ENCODE measurements at regions of chr7 and their contacts with region 1.

Region 1: GRCh38 chr7:103025341-103025740 is 49.3 kb downstream of the FBXL13 start:
- DNase-seq: no peak
- ATAC-seq: no peak
- H3K4me3 ChIP-seq: no peak overlapping the region
- H3K27ac ChIP-seq: no peak overlapping the region
- H3K4me1 ChIP-seq: no peaks in the 10 kb centered on the region
- H3K27me3 ChIP-seq: no peaks in the 10 kb centered on the region
- CTCF ChIP-seq: no peak

Region 2: GRCh38 chr7:102951839-102952238 is 73.5 kb before region 1 on chr7:
- CTCF ChIA-PET with region 1: interaction called, 10 read pairs
- POLR2A ChIA-PET with region 1: no interaction called
- intact Hi-C with region 1: no loop called
- DNase-seq: no peak
- ATAC-seq: no peak
- H3K4me3 ChIP-seq: no peak overlapping the region
- H3K27ac ChIP-seq: no peak overlapping the region
- H3K4me1 ChIP-seq: no peaks in the 10 kb centered on the region
- H3K27me3 ChIP-seq: no peaks in the 10 kb centered on the region
- CTCF ChIP-seq: no peak

Region 3: GRCh38 chr7:103009466-103010185 is 15.7 kb before region 1 on chr7:
- CTCF ChIA-PET with region 1: no interaction called
- POLR2A ChIA-PET with region 1: no interaction called
- intact Hi-C with region 1: no loop called
- DNase-seq: no peak
- ATAC-seq: no peak
- H3K4me3 ChIP-seq: no peak overlapping the region
- H3K27ac ChIP-seq: no peak overlapping the region
- H3K4me1 ChIP-seq: peaks cover 5% of the 10 kb centered on the region; the same call in 1 of the 2 replicates
- H3K27me3 ChIP-seq: no peaks in the 10 kb centered on the region
- CTCF ChIP-seq: no peak

Region 4: DNA sequence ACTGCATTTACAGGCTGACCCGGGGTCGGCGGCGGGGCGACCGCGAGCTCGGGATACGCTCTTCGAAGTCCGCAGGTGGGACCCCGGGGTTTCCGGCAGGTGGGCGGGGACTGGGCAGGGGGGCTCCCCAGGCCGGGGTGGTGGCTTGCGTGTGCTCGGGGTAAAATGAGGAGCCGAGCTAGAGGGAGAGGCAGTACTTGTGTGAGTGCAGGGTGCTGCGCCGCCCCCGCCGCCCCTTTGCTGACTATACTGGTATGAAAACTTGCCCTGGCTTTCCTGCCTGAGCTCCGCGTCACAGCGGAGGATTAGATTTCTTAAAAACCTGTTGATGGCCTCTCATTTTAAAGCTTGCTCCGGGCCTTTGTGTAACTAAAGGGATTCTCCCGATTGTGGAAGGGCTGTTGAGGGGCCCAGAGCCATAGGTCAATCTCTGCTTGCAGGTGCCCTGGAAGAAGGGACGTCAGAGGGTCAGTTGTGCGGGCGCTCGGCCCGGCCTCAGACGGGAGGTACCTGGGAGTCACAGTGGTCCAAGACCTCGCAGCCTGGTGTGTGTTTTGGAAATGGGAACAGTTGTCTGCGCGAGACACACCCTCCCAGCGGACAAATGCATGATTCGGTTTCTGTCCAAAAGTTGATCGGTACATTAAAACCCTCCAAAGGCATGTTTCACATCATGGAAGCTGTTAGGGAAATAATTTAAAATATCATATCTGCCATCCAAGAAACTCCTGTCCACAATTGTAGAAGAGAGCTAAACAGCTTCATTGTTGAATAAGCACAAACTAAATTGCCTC is 50.2 kb after region 1 on chr7:
- CTCF ChIA-PET with region 1: no interaction called
- POLR2A ChIA-PET with region 1: no interaction called
- intact Hi-C with region 1: no loop called
- DNase-seq: peak; percentile 32
- ATAC-seq: peak; percentile 42
- H3K4me3 ChIP-seq: peak overlapping the region; percentile 98
- H3K27ac ChIP-seq: peak overlapping the region; percentile 59
- H3K4me1 ChIP-seq: peaks cover 12% of the 10 kb centered on the region; the same call in 1 of the 2 replicates
- H3K27me3 ChIP-seq: no peaks in the 10 kb centered on the region
- CTCF ChIP-seq: no peak

Measured in PC-3 (cell line).